Activated CD8-positive, alpha-beta memory T cell treated with anti-CD3 and anti-CD28 coated beads, Interleukin-2, amount 10 ng/mL, durations not matched to agents 7 days and 5 days (primary cell): ENCODE measurements at regions of chr11 and their contacts with region 1.

Region 1: GRCh38 chr11:122215244-122215992 is 99.4 kb upstream of the BLID start:
- DNase-seq: peak; percentile 42
- ATAC-seq: peak; percentile 57
- H3K4me3 Mint-ChIP-seq: no peak overlapping the region
- H3K27ac Mint-ChIP-seq: no peak overlapping the region
- H3K4me1 Mint-ChIP-seq: no peaks in the 10 kb centered on the region
- H3K27me3 Mint-ChIP-seq: no peaks in the 10 kb centered on the region

Region 2: DNA sequence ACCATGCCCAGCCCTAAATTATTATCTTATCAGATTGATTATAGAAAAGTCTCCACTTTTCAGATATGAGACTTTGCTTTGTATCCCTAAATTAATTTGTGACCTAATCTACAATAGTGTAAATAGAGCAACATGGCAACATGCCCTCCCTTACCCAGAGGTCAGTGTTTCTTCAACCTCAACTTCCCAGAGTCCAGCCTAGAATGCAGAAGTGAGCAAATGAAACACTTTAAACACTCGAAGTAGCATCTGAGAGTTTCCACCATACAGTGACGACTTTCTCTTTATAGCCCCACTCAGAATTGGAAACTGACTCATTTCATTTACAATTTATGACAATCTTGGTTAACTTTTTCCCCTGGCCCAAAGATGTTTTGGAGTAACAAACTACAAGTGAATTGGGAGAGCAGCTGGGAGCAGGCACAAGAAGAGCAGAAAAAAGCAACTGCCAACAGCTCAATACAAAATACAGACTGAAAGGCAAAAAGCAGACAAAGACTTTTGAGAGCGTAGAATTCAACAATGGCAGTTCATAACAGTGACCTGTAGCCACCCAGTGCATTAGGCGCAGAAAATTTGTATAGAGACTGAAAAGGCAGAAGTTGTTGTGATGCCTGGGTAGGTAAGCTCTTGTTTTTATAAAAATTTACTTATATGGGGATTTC is 89.3 kb before region 1 on chr11:
- CTCF ChIA-PET with region 1: no interaction called
- DNase-seq: no peak
- ATAC-seq: no peak
- H3K4me3 Mint-ChIP-seq: no peak overlapping the region
- H3K27ac Mint-ChIP-seq: no peak overlapping the region
- H3K4me1 Mint-ChIP-seq: no peaks in the 10 kb centered on the region
- H3K27me3 Mint-ChIP-seq: no peaks in the 10 kb centered on the region

Region 3: DNA sequence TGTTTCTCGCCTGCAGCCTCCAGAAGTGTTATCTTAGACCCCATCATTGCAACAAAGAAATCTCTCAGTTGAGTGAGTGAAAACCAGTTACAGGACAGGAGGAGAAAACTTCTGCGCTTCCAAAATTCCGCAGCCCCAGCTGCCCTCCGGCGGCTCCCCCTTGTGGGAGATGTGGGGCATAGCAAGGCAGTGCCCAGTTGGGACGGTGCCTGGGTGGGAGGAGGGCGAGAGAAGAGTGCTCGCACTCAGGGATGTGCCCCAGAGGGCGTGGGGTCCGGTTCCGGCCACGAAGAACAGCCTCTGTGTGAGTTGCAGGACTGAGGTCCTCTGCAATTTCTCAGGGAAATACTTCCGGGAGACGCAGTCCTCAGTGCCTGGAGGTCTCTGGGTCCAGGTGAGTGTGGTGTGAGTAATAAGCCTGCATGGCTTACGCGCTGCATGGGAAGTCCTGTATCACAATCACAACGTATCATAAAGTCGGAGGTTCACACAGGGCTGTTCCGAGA is 12.4 kb before region 1 on chr11:
- CTCF ChIA-PET with region 1: interaction called, 10 read pairs
- DNase-seq: peak; percentile 46
- ATAC-seq: peak; percentile 63
- H3K4me3 Mint-ChIP-seq: no peak overlapping the region
- H3K27ac Mint-ChIP-seq: no peak overlapping the region
- H3K4me1 Mint-ChIP-seq: no peaks in the 10 kb centered on the region
- H3K27me3 Mint-ChIP-seq: peaks cover 10% of the 10 kb centered on the region

Region 4: GRCh38 chr11:122367809-122368231 is 152.4 kb after region 1 on chr11:
- CTCF ChIA-PET with region 1: no interaction called
- DNase-seq: no peak
- ATAC-seq: no peak
- H3K4me3 Mint-ChIP-seq: no peak overlapping the region
- H3K27ac Mint-ChIP-seq: no peak overlapping the region
- H3K4me1 Mint-ChIP-seq: no peaks in the 10 kb centered on the region
- H3K27me3 Mint-ChIP-seq: no peaks in the 10 kb centered on the region

Region 5: GRCh38 chr11:122505304-122506006 is 290.0 kb after region 1 on chr11:
- CTCF ChIA-PET with region 1: interaction called, 12 read pairs
- DNase-seq: peak; percentile 64
- ATAC-seq: peak; percentile 72
- H3K4me3 Mint-ChIP-seq: no peak overlapping the region
- H3K27ac Mint-ChIP-seq: no peak overlapping the region
- H3K4me1 Mint-ChIP-seq: no peaks in the 10 kb centered on the region
- H3K27me3 Mint-ChIP-seq: peaks cover 25% of the 10 kb centered on the region